Activated CD4-positive, alpha-beta T cell treated with anti-CD3 and anti-CD28 coated beads for 36 hours (primary cell): ENCODE measurements at regions of chr1 and their contacts with region 1.

Region 1: GRCh38 chr1:64136752-64137411 is 66.5 kb upstream of the UBE2U start:
- DNase-seq: peak; percentile 82
- ATAC-seq: peak; percentile 75
- H3K4me3 Mint-ChIP-seq: no peak overlapping the region
- H3K27ac Mint-ChIP-seq: no peak overlapping the region
- H3K4me1 Mint-ChIP-seq: peaks cover 5% of the 10 kb centered on the region
- H3K27me3 Mint-ChIP-seq: no peaks in the 10 kb centered on the region

Region 2: GRCh38 chr1:63615768-63616420 is 521.0 kb before region 1 on chr1:
- CTCF ChIA-PET with region 1: interaction called, 10 read pairs
- POLR2A ChIA-PET with region 1: no interaction called
- intact Hi-C with region 1: loop called (anchors 1 kb)
- DNase-seq: peak; percentile 63
- ATAC-seq: peak; percentile 65
- H3K4me3 Mint-ChIP-seq: no peak overlapping the region
- H3K27ac Mint-ChIP-seq: no peak overlapping the region
- H3K4me1 Mint-ChIP-seq: no peaks in the 10 kb centered on the region
- H3K27me3 Mint-ChIP-seq: no peaks in the 10 kb centered on the region

Region 3: DNA sequence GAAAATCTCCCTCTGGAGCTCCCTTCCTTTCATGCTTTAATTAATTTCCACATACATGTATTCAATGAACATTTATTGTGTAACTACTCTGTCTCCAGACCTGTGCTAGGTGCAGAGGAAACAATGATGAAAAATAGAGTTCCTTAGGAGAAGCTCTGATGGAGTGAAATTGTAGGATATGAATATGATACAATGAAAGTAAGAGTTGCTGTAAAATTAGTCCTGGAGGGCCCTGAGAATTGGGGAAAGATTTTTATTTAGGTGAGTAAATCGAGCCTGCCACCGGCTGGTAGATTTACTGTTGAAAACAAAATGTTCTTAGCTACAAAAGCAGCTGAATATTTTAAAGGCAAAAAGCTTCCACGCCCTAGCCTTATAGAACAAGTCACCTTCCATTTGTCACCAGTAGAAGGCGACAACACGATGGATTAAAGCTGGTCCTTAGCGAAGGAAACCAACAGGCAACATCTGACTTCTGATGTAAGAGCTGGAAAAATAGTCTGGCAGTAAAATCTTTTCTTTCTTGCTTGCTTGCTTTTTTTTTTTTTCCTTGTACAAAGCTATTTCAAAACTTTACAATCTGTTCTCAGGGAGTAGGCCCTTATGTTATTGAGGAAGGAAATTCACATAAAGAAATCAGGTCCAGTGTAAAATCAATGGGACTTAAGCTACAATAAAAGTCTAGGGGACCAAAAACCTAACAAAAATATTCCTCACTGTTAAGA is 445.0 kb before region 1 on chr1:
- CTCF ChIA-PET with region 1: interaction called, 18 read pairs
- POLR2A ChIA-PET with region 1: no interaction called
- intact Hi-C with region 1: loop called (anchors 1 kb)
- DNase-seq: peak; percentile 52
- ATAC-seq: peak; percentile 60
- H3K4me3 Mint-ChIP-seq: no peak overlapping the region
- H3K27ac Mint-ChIP-seq: no peak overlapping the region
- H3K4me1 Mint-ChIP-seq: no peaks in the 10 kb centered on the region
- H3K27me3 Mint-ChIP-seq: no peaks in the 10 kb centered on the region

Region 4: DNA sequence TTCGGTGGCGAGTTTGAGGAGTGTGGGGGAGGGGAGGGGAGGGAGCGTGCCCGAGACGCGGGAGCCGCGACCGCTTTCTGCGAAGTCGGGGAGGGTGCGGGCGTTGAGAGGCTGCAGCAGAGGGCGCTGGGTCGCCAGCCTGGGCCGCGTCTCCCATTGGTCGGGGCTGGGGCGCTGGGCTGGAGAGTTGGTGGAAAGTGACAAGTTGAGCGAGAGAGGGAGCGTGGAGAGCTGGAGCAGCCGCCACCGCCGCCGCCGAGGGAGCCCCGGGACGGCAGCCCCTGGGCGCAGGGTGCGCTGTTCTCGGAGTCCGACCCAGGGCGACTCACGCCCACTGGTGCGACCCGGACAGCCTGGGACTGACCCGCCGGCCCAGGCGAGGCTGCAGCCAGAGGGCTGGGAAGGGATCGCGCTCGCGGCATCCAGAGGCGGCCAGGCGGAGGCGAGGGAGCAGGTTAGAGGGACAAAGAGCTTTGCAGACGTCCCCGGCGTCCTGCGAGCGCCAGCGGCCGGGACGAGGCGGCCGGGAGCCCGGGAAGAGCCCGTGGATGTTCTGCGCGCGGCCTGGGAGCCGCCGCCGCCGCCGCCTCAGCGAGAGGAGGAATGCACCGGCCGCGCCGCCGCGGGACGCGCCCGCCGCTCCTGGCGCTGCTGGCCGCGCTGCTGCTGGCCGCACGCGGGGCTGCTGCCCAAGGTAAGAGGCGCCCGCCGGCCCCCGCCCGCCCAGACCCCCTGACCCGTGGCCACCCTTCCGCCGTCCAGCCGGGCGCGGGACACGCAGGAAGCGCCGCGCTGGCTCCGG is 362.9 kb before region 1 on chr1 and contains the start of gene ROR1:
- CTCF ChIA-PET with region 1: no interaction called
- POLR2A ChIA-PET with region 1: no interaction called
- intact Hi-C with region 1: loop called (anchors 2 to 5 kb)
- DNase-seq: peak; percentile 85
- ATAC-seq: peak; percentile 98
- H3K4me3 Mint-ChIP-seq: peak within 1 kb of the TSS; percentile 66
- H3K27ac Mint-ChIP-seq: no peak within 1 kb of the TSS
- H3K4me1 Mint-ChIP-seq: peaks cover 13% of the 10 kb centered on the region
- H3K27me3 Mint-ChIP-seq: peaks cover 50% of the 10 kb centered on the region
- total RNA-seq, gene ROR1: 0.21 TPM in 1 of 2 experiments, not detected in the other

Region 5: GRCh38 chr1:63917571-63918417 is 219.1 kb before region 1 on chr1:
- CTCF ChIA-PET with region 1: interaction called, 5 read pairs
- POLR2A ChIA-PET with region 1: no interaction called
- intact Hi-C with region 1: loop called (anchors 5 to 10 kb)
- DNase-seq: peak; percentile 51
- ATAC-seq: no peak
- H3K4me3 Mint-ChIP-seq: no peak overlapping the region
- H3K27ac Mint-ChIP-seq: no peak overlapping the region
- H3K4me1 Mint-ChIP-seq: no peaks in the 10 kb centered on the region
- H3K27me3 Mint-ChIP-seq: peaks cover 2% of the 10 kb centered on the region

Region 6: GRCh38 chr1:64124704-64125440 is 12.0 kb before region 1 on chr1:
- CTCF ChIA-PET with region 1: interaction called, 23 read pairs
- POLR2A ChIA-PET with region 1: no interaction called
- intact Hi-C with region 1: no loop called
- DNase-seq: no peak
- ATAC-seq: no peak
- H3K4me3 Mint-ChIP-seq: no peak overlapping the region
- H3K27ac Mint-ChIP-seq: no peak overlapping the region
- H3K4me1 Mint-ChIP-seq: no peaks in the 10 kb centered on the region
- H3K27me3 Mint-ChIP-seq: peaks cover 7% of the 10 kb centered on the region

Region 7: GRCh38 chr1:64147759-64148158 is 10.9 kb after region 1 on chr1:
- CTCF ChIA-PET with region 1: interaction called, 15 read pairs
- POLR2A ChIA-PET with region 1: interaction called, 4 read pairs
- intact Hi-C with region 1: no loop called
- DNase-seq: no peak
- ATAC-seq: no peak
- H3K4me3 Mint-ChIP-seq: no peak overlapping the region
- H3K27ac Mint-ChIP-seq: no peak overlapping the region
- H3K4me1 Mint-ChIP-seq: no peaks in the 10 kb centered on the region
- H3K27me3 Mint-ChIP-seq: peaks cover 2% of the 10 kb centered on the region

Region 8: GRCh38 chr1:64203420-64203819 is 66.5 kb after region 1 on chr1 and contains the start of gene UBE2U:
- CTCF ChIA-PET with region 1: no interaction called
- POLR2A ChIA-PET with region 1: no interaction called
- intact Hi-C with region 1: no loop called
- DNase-seq: no peak
- ATAC-seq: no peak
- H3K4me3 Mint-ChIP-seq: no peak within 1 kb of the TSS
- H3K27ac Mint-ChIP-seq: no peak within 1 kb of the TSS
- H3K4me1 Mint-ChIP-seq: peaks cover 5% of the 10 kb centered on the region
- H3K27me3 Mint-ChIP-seq: peaks cover 10% of the 10 kb centered on the region
- total RNA-seq, gene UBE2U: not detected